Activated CD8-positive, alpha-beta T cell treated with anti-CD3 and anti-CD28 coated beads for 36 hours (primary cell): ENCODE measurements at regions of chr9 and their contacts with region 1.

Region 1: GRCh38 chr9:72280913-72281500 is 84.0 kb downstream of the ZFAND5 start:
- DNase-seq: peak; percentile 81
- ATAC-seq: peak; percentile 77
- H3K4me3 Mint-ChIP-seq: no peak overlapping the region
- H3K27ac Mint-ChIP-seq: no peak overlapping the region
- H3K4me1 Mint-ChIP-seq: no peaks in the 10 kb centered on the region
- H3K27me3 Mint-ChIP-seq: no peaks in the 10 kb centered on the region
- CTCF ChIP-seq: peak; percentile 91

Region 2: GRCh38 chr9:71647094-71647591 is 633.9 kb before region 1 on chr9:
- CTCF ChIA-PET with region 1: no interaction called
- POLR2A ChIA-PET with region 1: no interaction called
- intact Hi-C with region 1: no loop called
- DNase-seq: peak; percentile 12
- ATAC-seq: no peak
- H3K4me3 Mint-ChIP-seq: no peak overlapping the region
- H3K27ac Mint-ChIP-seq: no peak overlapping the region
- H3K4me1 Mint-ChIP-seq: peaks cover 12% of the 10 kb centered on the region
- H3K27me3 Mint-ChIP-seq: no peaks in the 10 kb centered on the region
- CTCF ChIP-seq: no peak

Region 3: GRCh38 chr9:72292256-72292682 is 11.3 kb after region 1 on chr9:
- CTCF ChIA-PET with region 1: interaction called, 13 read pairs
- POLR2A ChIA-PET with region 1: no interaction called
- intact Hi-C with region 1: no loop called
- DNase-seq: no peak
- ATAC-seq: peak; percentile 45
- H3K4me3 Mint-ChIP-seq: no peak overlapping the region
- H3K27ac Mint-ChIP-seq: no peak overlapping the region
- H3K4me1 Mint-ChIP-seq: no peaks in the 10 kb centered on the region
- H3K27me3 Mint-ChIP-seq: peaks cover 3% of the 10 kb centered on the region
- CTCF ChIP-seq: peak; percentile 58

Region 4: GRCh38 chr9:72346333-72346732 is 65.3 kb after region 1 on chr9:
- CTCF ChIA-PET with region 1: no interaction called
- POLR2A ChIA-PET with region 1: no interaction called
- intact Hi-C with region 1: no loop called
- DNase-seq: no peak
- ATAC-seq: no peak
- H3K4me3 Mint-ChIP-seq: no peak overlapping the region
- H3K27ac Mint-ChIP-seq: no peak overlapping the region
- H3K4me1 Mint-ChIP-seq: peaks cover 17% of the 10 kb centered on the region
- H3K27me3 Mint-ChIP-seq: no peaks in the 10 kb centered on the region
- CTCF ChIP-seq: no peak

Region 5: GRCh38 chr9:72586388-72587130 is 305.6 kb after region 1 on chr9:
- CTCF ChIA-PET with region 1: interaction called, 73 read pairs
- POLR2A ChIA-PET with region 1: no interaction called
- intact Hi-C with region 1: no loop called
- DNase-seq: peak; percentile 54
- ATAC-seq: peak; percentile 75
- H3K4me3 Mint-ChIP-seq: no peak overlapping the region
- H3K27ac Mint-ChIP-seq: peak overlapping the region; percentile 40
- H3K4me1 Mint-ChIP-seq: peaks cover 50% of the 10 kb centered on the region
- H3K27me3 Mint-ChIP-seq: no peaks in the 10 kb centered on the region
- CTCF ChIP-seq: no peak

Region 6: GRCh38 chr9:72623156-72623555 is 342.1 kb after region 1 on chr9:
- CTCF ChIA-PET with region 1: interaction called, 10 read pairs
- POLR2A ChIA-PET with region 1: no interaction called
- intact Hi-C with region 1: no loop called
- DNase-seq: no peak
- ATAC-seq: no peak
- H3K4me3 Mint-ChIP-seq: no peak overlapping the region
- H3K27ac Mint-ChIP-seq: no peak overlapping the region
- H3K4me1 Mint-ChIP-seq: no peaks in the 10 kb centered on the region
- H3K27me3 Mint-ChIP-seq: peaks cover 1% of the 10 kb centered on the region
- CTCF ChIP-seq: no peak

Region 7: GRCh38 chr9:73023025-73023541 is 742.1 kb after region 1 on chr9:
- CTCF ChIA-PET with region 1: interaction called, 18 read pairs
- POLR2A ChIA-PET with region 1: no interaction called
- intact Hi-C with region 1: no loop called
- DNase-seq: peak; percentile 49
- ATAC-seq: peak; percentile 68
- H3K4me3 Mint-ChIP-seq: no peak overlapping the region
- H3K27ac Mint-ChIP-seq: no peak overlapping the region
- H3K4me1 Mint-ChIP-seq: peaks cover 8% of the 10 kb centered on the region
- H3K27me3 Mint-ChIP-seq: peaks cover 14% of the 10 kb centered on the region
- CTCF ChIP-seq: peak; percentile 83